ENCODE measurements at regions of chr5 and their contacts with region 1.

Region 1: DNA sequence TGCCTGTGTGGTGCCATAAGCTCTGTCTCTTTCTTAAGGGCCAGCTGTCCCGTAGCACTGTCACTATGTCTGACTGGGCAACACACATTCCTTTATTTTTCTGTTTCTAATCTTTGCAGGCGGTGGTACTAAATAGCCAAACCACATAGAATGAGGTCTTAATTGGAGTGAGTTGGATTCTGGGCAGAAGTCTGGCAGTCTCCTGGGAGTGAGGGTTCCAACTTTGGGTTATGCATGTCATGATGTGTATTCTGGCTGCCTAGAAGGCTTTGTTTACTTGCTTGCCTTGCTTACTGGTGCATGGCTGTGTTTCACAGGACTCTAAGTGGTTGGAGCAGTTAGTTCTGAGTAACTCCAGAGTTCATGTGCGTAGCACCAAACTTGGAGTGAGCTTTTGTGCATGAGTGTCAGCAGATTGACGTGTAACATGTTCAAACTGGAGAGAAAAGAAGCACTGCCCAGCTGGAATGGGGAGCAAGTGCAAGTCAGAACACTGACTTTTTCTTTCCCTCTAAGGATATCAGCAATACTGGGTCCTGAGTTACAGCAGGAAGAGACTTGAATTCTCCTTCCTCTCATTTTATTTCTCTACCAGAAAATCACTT is 185.8 kb downstream of the PCSK1 start:
- DNase-seq: no peak
- ATAC-seq: peak; percentile 91

Region 2: DNA sequence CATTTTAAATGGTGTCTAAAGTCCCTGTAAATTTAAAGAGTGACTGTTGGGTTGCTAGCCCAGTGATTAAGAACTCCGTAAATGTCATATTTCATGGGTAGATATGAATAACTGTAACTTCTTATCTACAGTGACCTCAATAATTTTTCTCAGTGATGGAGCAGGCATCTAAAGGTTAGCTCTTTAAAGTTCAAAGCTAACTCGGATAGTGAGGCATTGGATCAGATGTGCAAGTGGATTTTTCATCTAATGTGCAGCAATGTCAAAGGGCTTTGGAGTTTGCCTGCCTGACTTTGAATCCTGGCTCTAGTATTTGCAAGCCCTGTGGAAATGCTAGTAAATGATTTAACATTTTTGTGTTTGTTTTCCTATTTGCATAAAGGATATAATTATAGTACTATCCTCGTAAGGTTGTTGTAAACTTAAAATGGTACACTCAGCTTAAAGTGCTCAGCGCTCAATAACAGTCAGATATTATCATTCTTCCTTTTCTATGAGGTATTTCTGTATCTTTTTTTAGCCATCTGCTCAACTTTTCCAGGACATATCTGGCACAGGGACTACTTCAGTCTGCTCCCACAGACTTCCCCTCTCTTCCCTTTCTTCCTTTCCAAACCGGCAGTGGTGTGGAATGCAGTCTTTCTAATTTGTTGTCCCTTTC is 121.8 kb before region 1 on chr5:
- intact Hi-C with region 1: no loop called
- DNase-seq: no peak
- ATAC-seq: peak; percentile 26

Region 3: DNA sequence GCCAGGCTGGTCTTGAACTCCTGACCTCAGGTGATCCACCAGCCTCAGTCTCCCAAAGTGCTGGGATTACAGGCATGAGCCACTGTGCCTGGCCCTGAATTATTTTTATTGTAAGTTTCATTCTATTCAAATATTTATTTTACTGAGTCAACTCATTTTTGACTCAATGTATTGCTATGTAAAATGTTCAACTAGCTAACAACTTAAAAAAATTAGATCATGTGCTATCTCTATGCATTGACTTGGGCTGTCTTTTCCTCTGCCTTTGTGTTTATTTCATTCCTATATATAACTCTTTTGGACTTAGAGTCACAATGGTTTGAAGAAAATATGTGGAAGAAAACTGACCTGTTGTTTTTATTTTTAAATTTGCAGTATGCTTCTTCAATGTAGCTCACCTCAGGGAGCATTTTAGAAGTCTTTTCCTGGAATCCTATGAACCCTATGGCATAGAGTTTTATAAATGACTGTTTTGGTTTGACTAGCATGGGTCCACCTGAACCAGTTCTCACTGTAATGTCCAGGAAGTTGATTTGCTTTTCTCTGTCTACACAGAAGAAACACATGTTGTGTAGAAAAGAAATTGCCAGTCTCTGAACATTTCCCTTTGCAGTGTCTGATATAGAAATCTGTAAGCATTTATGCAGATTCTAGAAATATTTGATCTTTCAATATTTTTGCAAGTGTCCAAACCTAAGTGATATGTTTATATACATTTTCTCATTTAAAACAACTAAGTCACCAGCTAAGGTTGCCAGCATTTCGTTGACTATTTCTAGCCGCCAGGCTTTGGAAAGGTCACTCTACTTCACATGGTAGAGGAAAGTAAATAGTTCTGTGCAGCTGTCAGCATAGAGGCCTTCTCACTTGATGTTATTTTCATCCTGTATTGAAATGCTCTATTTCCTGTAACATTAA is 47.0 kb after region 1 on chr5:
- intact Hi-C with region 1: loop called (anchors 5 kb)
- DNase-seq: no peak
- ATAC-seq: peak; percentile 64

Region 4: GRCh38 chr5:96331210-96331609 is 84.0 kb after region 1 on chr5:
- intact Hi-C with region 1: loop called (anchors 5 kb)
- DNase-seq: no peak
- ATAC-seq: no peak

Measured in Right ventricle myocardium inferior (tissue), 1 donor.